H1 (cell line): ENCODE measurements at regions of chr12 and their contacts with region 1.

Region 1: DNA sequence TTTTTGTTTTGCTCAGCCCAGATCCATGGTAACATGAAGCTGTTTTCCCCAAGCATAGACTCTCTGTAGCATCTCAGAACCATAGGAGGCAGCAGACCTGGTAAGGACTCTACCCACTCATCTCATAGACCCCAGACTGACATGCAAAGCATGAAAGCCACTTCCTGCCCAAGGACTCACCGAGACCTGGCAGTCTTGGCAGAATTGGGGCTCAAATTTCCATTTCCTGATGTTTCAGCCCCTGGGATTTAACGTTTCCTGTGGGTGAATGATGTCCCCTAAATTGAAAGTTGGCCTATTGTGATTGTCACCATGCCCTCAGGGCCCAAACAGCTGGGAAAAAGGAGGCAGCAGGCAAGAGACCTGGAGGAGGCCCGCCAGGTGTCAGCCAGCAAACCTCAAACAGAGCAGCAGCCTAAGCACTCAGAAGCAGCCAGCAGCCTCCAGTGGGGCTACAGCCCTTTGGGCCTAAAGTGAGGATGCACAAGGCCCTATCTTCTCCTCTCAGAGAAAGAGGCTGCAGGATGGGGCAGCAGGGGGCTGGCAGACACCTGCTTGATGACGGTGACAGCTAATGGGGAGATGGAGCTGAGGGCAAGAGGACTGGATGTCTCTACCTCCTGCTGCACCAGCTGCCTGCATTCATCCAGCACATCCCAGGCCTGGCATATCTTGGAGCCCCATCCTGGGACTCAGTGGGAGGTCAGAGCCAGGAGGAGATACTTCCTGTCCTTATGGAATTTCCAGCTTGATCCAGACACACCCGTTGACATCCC is 8.5 kb downstream of the KRT85 start:
- DNase-seq: no peak
- H3K4me3 ChIP-seq: no peak overlapping the region
- H3K27ac ChIP-seq: no peak overlapping the region
- H3K4me1 ChIP-seq: no peaks in the 10 kb centered on the region
- H3K27me3 ChIP-seq: no peaks in the 10 kb centered on the region
- CTCF ChIP-seq: no peak
- EP300 ChIP-seq: no peak
- POLR2A ChIP-seq: no peak
- RAD21 ChIP-seq: no peak

Region 2: GRCh38 chr12:52333326-52333725 is 25.4 kb before region 1 on chr12:
- CTCF ChIA-PET with region 1: interaction called, 20 read pairs
- POLR2A ChIA-PET with region 1: no interaction called
- DNase-seq: no peak
- H3K4me3 ChIP-seq: no peak overlapping the region
- H3K27ac ChIP-seq: no peak overlapping the region
- H3K4me1 ChIP-seq: peaks cover 0 to 3% (median 0%) of the 10 kb centered on the region in 4 experiments; a peak in 1 of 7 replicates
- H3K27me3 ChIP-seq: no peaks in the 10 kb centered on the region
- CTCF ChIP-seq: no peak
- EP300 ChIP-seq: no peak
- POLR2A ChIP-seq: no peak
- RAD21 ChIP-seq: no peak

Region 3: GRCh38 chr12:52338241-52338960 is 20.4 kb before region 1 on chr12:
- CTCF ChIA-PET with region 1: interaction called, 88 read pairs
- POLR2A ChIA-PET with region 1: no interaction called
- DNase-seq: no peak
- H3K4me3 ChIP-seq: no peak overlapping the region
- H3K27ac ChIP-seq: no peak overlapping the region
- H3K4me1 ChIP-seq: peaks cover 0 to 3% (median 0%) of the 10 kb centered on the region in 4 experiments; a peak in 1 of 7 replicates
- H3K27me3 ChIP-seq: no peaks in the 10 kb centered on the region
- CTCF ChIP-seq: no peak
- EP300 ChIP-seq: no peak
- POLR2A ChIP-seq: no peak
- RAD21 ChIP-seq: no peak

Region 4: DNA sequence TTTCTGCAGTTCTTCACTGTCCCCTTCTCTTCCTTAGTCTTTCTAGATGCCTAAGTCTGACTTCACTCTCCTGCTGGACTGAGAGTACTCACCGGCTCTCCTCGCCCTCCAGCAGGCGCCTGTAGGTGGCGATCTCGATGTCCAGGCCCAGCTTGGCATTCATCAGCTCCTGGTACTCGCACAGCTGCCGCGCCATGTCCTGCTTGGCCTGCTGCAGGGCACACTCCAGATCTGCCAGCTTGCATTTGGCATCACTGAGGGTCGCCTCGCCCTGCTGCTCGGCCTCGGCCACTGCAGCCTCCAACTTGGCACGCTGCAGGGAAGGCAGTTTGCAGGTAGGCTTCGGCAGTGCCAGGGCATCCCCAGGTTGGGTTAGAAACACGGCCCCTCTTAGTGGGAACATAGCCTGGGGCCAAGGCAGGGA is 21.5 kb after region 1 on chr12:
- CTCF ChIA-PET with region 1: interaction called, 18 read pairs
- POLR2A ChIA-PET with region 1: no interaction called
- DNase-seq: peak in 1 of 2 experiments; percentile 67
- H3K4me3 ChIP-seq: no peak overlapping the region
- H3K27ac ChIP-seq: no peak overlapping the region
- H3K4me1 ChIP-seq: no peaks in the 10 kb centered on the region
- H3K27me3 ChIP-seq: no peaks in the 10 kb centered on the region
- CTCF ChIP-seq: peak; percentile 68 to 77 (median 69)
- EP300 ChIP-seq: no peak
- POLR2A ChIP-seq: no peak
- RAD21 ChIP-seq: peak; percentile 36 to 51; a peak in 3 of 4 replicates